ENCODE measurements at regions of chr2 and their contacts with region 1.

Region 1: DNA sequence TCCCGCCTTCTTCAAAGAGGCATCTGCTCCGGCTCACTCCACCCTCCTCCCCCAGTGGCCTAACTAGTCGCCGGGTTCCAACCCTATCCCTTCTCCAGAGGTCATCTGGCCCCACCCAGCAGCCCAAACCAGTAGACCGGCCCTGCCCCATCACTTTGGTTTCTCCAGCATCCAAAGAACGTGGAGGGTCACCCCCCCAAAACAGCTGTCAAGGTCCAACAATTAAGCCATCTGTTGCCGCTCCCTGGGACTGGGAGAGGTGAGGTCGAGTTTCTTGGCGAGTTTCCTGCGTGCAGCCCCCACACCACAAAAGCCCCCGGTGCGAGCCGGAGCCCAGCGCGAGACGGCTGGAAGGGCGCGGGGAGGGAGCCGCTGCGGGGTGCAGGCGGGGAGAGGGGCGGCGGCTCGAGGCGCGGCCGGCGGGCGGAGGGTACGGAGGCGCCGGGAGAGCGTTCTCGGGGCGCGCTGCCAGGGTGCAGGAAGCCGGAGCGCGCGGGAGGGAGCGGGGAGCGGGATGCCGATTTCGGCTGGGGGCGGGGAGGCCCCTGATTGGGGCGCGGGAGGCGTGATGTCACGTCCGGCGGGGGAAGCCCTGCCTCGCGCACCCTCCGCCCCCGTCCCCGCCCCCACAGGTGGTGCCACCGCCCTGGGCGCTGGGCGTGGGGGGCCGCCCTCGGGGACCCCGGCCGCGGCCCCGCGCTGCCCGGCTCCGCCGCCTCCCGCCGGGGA is 571 bp upstream of the GPC1 start:
- DNase-seq: peak; percentile 67 to 91 (median 90)
- ATAC-seq: peak; percentile 86
- H3K4me3 ChIP-seq: peak overlapping the region; percentile 50 to 65
- H3K4me3 Mint-ChIP-seq: peak overlapping the region; percentile 85
- H3K27ac ChIP-seq: no peak overlapping the region
- H3K27ac Mint-ChIP-seq: no peak overlapping the region
- H3K4me1 ChIP-seq: peaks cover 10% of the 10 kb centered on the region
- H3K4me1 Mint-ChIP-seq: peaks cover 6% of the 10 kb centered on the region
- H3K27me3 ChIP-seq: peaks cover 15 to 17% of the 10 kb centered on the region in 2 experiments
- H3K27me3 Mint-ChIP-seq: peaks cover 18% of the 10 kb centered on the region
- CTCF ChIP-seq: no peak

Region 2: DNA sequence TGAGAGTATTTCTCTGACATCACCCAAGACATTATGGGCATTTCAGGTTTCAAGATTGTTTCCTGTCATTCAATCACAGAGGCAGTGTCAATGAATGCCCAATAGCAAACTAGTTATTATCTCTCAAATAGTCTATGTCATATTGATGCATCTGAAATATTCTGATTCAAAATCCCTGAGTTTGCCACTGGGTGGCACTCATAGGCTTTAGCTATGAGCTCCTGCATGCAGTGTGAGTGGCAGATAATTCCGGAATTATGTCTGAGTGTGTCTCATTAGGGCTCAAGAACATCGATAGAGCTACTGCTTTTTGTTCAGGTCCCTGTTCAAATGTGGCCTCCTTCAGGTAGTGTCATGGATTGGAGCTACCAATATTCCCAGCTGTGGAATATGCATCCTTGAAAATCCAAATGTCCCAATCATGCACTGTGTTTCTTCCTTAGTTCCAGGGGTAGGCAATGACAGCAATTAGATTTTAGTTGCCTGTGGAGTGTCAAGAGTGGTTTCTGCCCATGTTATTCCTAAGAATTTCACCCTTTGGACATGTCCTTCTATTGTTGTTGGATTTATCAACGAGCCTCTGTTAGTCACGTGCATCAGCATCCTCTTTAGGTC is 373.8 kb before region 1 on chr2:
- CTCF ChIA-PET with region 1: interaction called, 4 read pairs
- POLR2A ChIA-PET with region 1: no interaction called
- intact Hi-C with region 1: loop called in 1 of 2 experiments (anchors 5 kb)
- DNase-seq: peak in 8 of 9 experiments; percentile 24 to 70 (median 50)
- ATAC-seq: peak; percentile 73
- H3K4me3 ChIP-seq: no peak overlapping the region
- H3K4me3 Mint-ChIP-seq: no peak overlapping the region
- H3K27ac ChIP-seq: no peak overlapping the region
- H3K27ac Mint-ChIP-seq: no peak overlapping the region
- H3K4me1 ChIP-seq: no peaks in the 10 kb centered on the region
- H3K4me1 Mint-ChIP-seq: no peaks in the 10 kb centered on the region
- H3K27me3 ChIP-seq: peaks cover 0 to 7% of the 10 kb centered on the region in 2 experiments
- H3K27me3 Mint-ChIP-seq: peaks cover 14% of the 10 kb centered on the region
- CTCF ChIP-seq: peak; percentile 72

Region 3: GRCh38 chr2:240136013-240136670 is 298.8 kb before region 1 on chr2 and contains the start of gene COPS9:
- CTCF ChIA-PET with region 1: no interaction called
- POLR2A ChIA-PET with region 1: no interaction called
- intact Hi-C with region 1: loop called in 1 of 2 experiments (anchors 5 kb)
- DNase-seq: peak; percentile 78 to 92 (median 86)
- ATAC-seq: peak; percentile 95
- H3K4me3 ChIP-seq: peak within 1 kb of the TSS; percentile 92 to 93
- H3K4me3 Mint-ChIP-seq: peak within 1 kb of the TSS; percentile 92
- H3K27ac ChIP-seq: peak within 1 kb of the TSS; percentile 61 to 76
- H3K27ac Mint-ChIP-seq: peak within 1 kb of the TSS; percentile 89
- H3K4me1 ChIP-seq: peaks cover 16% of the 10 kb centered on the region
- H3K4me1 Mint-ChIP-seq: peaks cover 27% of the 10 kb centered on the region
- H3K27me3 ChIP-seq: no peaks in the 10 kb centered on the region
- H3K27me3 Mint-ChIP-seq: no peaks in the 10 kb centered on the region
- CTCF ChIP-seq: no peak
- total RNA-seq, gene COPS9: 56.4 to 59.6 TPM

Region 4: GRCh38 chr2:240149943-240150784 is 284.7 kb before region 1 on chr2:
- CTCF ChIA-PET with region 1: no interaction called
- POLR2A ChIA-PET with region 1: no interaction called
- intact Hi-C with region 1: loop called in 1 of 2 experiments (anchors 1 kb)
- DNase-seq: peak in 4 of 9 experiments; percentile 20 to 43 (median 32)
- ATAC-seq: peak; percentile 64
- H3K4me3 ChIP-seq: no peak overlapping the region
- H3K4me3 Mint-ChIP-seq: no peak overlapping the region
- H3K27ac ChIP-seq: no peak overlapping the region
- H3K27ac Mint-ChIP-seq: no peak overlapping the region
- H3K4me1 ChIP-seq: no peaks in the 10 kb centered on the region
- H3K4me1 Mint-ChIP-seq: no peaks in the 10 kb centered on the region
- H3K27me3 ChIP-seq: peaks cover 0 to 7% of the 10 kb centered on the region in 2 experiments
- H3K27me3 Mint-ChIP-seq: peaks cover 28% of the 10 kb centered on the region
- CTCF ChIP-seq: peak; percentile 50

Region 5: GRCh38 chr2:240232961-240233893 is 201.7 kb before region 1 on chr2:
- CTCF ChIA-PET with region 1: interaction called, 14 read pairs
- POLR2A ChIA-PET with region 1: no interaction called
- intact Hi-C with region 1: loop called (anchors 1 kb)
- DNase-seq: peak; percentile 41 to 81 (median 71)
- ATAC-seq: peak; percentile 80
- H3K4me3 ChIP-seq: peak overlapping the region in 1 of 2 experiments; percentile 33
- H3K4me3 Mint-ChIP-seq: peak overlapping the region; percentile 50
- H3K27ac ChIP-seq: no peak overlapping the region
- H3K27ac Mint-ChIP-seq: no peak overlapping the region
- H3K4me1 ChIP-seq: peaks cover 16% of the 10 kb centered on the region
- H3K4me1 Mint-ChIP-seq: peaks cover 7% of the 10 kb centered on the region
- H3K27me3 ChIP-seq: no peaks in the 10 kb centered on the region
- H3K27me3 Mint-ChIP-seq: peaks cover 21% of the 10 kb centered on the region
- CTCF ChIP-seq: peak; percentile 70

Region 6: DNA sequence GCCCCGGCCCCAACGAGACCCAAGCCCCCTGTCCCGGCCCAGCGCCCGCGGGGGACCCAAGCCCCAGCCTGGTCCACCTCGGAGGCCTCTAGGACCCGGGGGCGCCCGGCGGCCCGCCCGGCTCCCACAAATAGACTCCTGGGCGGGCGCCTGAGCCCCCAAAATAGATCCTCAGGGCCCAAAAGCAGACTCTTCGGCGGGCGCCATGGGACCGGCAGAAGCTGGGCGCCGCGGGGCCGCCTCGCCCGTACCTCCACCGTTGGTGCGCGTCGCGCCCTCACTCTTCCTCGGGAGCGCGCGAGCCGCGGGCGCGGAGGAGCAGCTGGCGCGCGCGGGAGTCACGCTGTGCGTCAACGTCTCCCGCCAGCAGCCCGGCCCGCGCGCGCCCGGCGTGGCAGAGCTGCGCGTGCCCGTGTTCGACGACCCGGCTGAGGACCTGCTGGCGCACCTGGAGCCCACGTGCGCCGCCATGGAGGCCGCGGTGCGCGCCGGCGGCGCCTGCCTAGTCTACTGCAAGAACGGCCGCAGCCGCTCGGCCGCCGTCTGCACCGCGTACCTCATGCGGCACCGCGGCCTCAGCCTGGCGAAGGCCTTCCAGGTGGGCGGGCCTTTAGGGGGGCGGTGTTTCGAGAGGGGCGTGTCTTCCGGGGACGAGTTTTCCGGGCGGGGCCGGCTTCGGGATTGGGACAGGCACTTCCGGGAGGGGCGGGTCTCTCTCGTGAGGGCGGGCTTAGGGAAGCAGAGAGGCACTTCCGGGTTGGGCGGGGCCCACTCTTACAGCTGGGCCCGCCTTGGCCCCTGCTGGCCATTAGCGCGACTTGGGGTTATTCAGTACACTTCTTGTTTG is 125.8 kb after region 1 on chr2:
- CTCF ChIA-PET with region 1: no interaction called
- POLR2A ChIA-PET with region 1: no interaction called
- intact Hi-C with region 1: no loop called
- DNase-seq: peak; percentile 98 to 100 (median 100)
- ATAC-seq: peak; percentile 59
- H3K4me3 ChIP-seq: peak overlapping the region; percentile 74 to 76
- H3K4me3 Mint-ChIP-seq: peak overlapping the region; percentile 89
- H3K27ac ChIP-seq: peak overlapping the region; percentile 82 to 84
- H3K27ac Mint-ChIP-seq: peak overlapping the region; percentile 96
- H3K4me1 ChIP-seq: peaks cover 80% of the 10 kb centered on the region
- H3K4me1 Mint-ChIP-seq: peaks cover 71% of the 10 kb centered on the region
- H3K27me3 ChIP-seq: no peaks in the 10 kb centered on the region
- H3K27me3 Mint-ChIP-seq: no peaks in the 10 kb centered on the region
- CTCF ChIP-seq: no peak

Region 7: DNA sequence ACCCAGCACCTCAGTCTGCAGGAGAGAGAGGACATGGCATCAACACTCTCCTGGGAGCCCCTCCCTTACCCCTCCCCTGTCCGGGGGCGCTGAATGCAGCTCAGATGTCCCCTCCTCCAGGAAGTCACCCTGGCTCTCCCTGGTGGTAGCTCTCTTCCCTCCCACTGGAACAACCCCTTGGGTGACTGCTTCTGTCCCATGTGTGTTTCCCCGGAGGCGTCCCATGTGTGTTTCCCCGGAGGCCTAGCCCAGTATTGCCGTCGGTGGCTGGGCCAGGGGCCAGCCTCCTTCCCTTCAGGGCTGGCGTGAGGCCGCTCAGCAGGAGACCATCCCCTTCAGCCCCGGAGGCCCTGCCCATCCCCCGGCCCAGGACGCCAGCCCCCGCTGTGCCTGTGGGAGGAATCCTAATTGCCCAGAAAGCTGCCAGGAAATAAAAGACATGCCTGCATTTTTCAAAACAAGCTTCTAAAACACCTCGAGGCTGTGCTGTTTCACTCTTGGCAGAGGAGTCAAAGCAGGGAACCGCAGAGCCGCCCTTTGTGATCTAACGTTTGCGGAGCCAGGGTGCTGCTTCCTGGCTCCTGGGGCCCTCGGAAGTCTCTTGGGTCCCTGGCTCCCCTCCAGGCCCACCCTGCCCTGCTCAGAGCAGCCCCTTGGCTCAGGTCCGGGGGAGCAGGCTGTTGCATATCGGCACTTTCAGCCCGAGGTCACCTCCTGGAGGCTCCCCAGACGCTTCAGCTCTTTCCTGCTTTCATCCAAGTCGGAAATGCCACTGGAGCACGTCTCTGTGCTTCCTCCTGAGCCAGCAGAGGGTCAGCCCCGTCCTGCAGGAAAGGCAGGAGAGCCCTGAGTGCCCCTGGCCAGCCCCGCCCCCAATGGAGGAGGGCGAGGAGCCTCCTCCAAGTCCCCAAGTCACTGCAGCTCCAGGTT is 575.0 kb after region 1 on chr2:
- CTCF ChIA-PET with region 1: no interaction called
- POLR2A ChIA-PET with region 1: no interaction called
- intact Hi-C with region 1: no loop called
- DNase-seq: peak in 8 of 9 experiments; percentile 36 to 83 (median 68)
- ATAC-seq: peak; percentile 80
- H3K4me3 ChIP-seq: peak overlapping the region; percentile 32 to 45
- H3K4me3 Mint-ChIP-seq: peak overlapping the region; percentile 67
- H3K27ac ChIP-seq: peak overlapping the region; percentile 56 to 71
- H3K27ac Mint-ChIP-seq: peak overlapping the region; percentile 91
- H3K4me1 ChIP-seq: peaks cover 67% of the 10 kb centered on the region
- H3K4me1 Mint-ChIP-seq: peaks cover 59% of the 10 kb centered on the region
- H3K27me3 ChIP-seq: no peaks in the 10 kb centered on the region
- H3K27me3 Mint-ChIP-seq: no peaks in the 10 kb centered on the region
- CTCF ChIP-seq: no peak

Measured in CD8-positive, alpha-beta T cell (primary cell).